Activated CD4-positive, alpha-beta T cell treated with anti-CD3 and anti-CD28 coated beads for 36 hours (primary cell): ENCODE measurements at regions of chr19 and their contacts with region 1.

Region 1: DNA sequence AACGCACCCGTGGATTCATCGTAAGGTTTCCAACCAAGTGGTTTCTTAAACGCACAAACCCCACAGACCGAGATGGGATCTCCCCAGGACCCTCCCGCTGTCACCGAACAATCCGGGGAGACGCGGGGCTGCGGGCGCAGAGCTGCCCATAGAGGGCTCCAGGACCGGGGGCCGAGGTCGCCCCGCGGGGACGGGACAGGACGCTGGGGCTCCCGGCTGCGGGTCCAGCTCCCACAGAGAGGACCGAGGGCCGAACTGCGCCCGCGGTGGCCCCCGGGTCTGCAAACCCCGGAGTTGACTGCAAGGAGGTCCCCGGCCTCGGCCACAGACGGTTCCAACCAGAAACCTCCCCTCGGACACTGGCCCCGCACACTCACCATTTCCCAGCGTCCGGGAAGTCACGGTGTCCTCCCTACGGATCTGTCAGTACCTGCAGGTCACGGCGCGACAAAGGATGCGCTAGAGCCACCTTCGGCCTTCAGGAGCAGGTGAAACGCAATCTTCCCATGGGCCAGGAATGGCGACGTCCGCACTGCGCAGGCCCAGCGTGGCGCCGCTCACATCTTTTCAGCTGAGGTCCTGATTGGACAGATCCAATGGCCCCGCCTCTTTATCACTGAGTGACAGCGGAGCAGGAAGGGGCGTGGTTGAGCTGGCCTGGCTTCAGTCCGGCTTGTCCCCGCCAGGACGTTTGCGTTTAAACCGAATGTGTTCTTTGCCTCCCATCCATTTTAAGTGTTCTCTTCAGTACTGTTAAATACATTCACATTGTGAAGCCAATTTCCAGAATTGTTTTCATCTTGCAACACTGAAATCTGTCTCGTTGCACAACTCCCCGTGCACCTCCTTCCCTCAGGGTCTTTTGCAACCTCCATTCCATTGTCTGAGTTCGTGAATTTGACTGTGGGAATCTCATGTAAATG is at the start of gene ZNF14:
- DNase-seq: peak; percentile 96
- ATAC-seq: peak; percentile 100
- H3K4me3 Mint-ChIP-seq: peak within 1 kb of the TSS; percentile 85
- H3K27ac Mint-ChIP-seq: peak within 1 kb of the TSS; percentile 87
- H3K4me1 Mint-ChIP-seq: peaks cover 20% of the 10 kb centered on the region
- H3K27me3 Mint-ChIP-seq: no peaks in the 10 kb centered on the region
- total RNA-seq, gene ZNF14: 9.2 TPM

Region 2: GRCh38 chr19:19531951-19532805 is 200.7 kb before region 1 on chr19:
- CTCF ChIA-PET with region 1: no interaction called
- POLR2A ChIA-PET with region 1: no interaction called
- intact Hi-C with region 1: loop called in 1 of 2 experiments (anchors 5 kb)
- DNase-seq: peak; percentile 92
- ATAC-seq: peak; percentile 87
- H3K4me3 Mint-ChIP-seq: no peak overlapping the region
- H3K27ac Mint-ChIP-seq: no peak overlapping the region
- H3K4me1 Mint-ChIP-seq: peaks cover 10% of the 10 kb centered on the region
- H3K27me3 Mint-ChIP-seq: no peaks in the 10 kb centered on the region

Region 3: GRCh38 chr19:19711934-19712828 is 20.7 kb before region 1 on chr19:
- CTCF ChIA-PET with region 1: no interaction called
- POLR2A ChIA-PET with region 1: no interaction called
- intact Hi-C with region 1: no loop called
- DNase-seq: no peak
- ATAC-seq: no peak
- H3K4me3 Mint-ChIP-seq: no peak overlapping the region
- H3K27ac Mint-ChIP-seq: no peak overlapping the region
- H3K4me1 Mint-ChIP-seq: no peaks in the 10 kb centered on the region
- H3K27me3 Mint-ChIP-seq: no peaks in the 10 kb centered on the region

Region 4: DNA sequence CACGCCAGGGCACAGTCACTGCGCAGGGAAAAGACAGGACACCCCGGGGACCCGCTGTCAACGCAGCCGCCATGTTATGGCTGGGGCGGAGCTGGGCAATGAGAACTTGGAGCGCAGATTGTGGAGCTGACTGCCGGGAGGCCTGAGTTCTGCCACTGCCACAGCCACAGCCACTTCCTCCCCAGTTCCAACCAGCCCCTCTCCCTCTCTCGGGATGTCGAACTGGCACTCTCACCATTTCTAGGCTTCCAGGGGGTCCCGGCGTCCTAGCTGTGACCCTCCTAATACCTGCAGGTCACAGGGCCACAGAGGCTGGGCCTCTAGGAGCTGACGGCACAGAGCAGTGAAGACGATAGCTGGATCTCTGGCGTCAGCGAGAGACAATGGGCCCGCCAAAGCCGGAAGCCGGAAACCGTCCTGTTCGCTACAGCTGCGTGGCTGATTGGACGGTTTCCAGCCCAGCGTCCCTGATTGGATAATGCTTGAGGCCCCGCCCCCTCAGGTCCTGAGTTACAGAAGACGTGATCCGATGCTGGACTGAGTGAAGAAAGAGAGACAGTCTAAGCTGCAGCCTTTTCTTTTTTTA is 88.6 kb after region 1 on chr19 and contains the start of gene ZNF506:
- CTCF ChIA-PET with region 1: no interaction called
- POLR2A ChIA-PET with region 1: interaction called, 6 read pairs
- intact Hi-C with region 1: loop called (anchors 1 kb)
- DNase-seq: peak; percentile 99
- ATAC-seq: peak; percentile 88
- H3K4me3 Mint-ChIP-seq: peak within 1 kb of the TSS; percentile 96
- H3K27ac Mint-ChIP-seq: peak within 1 kb of the TSS; percentile 99
- H3K4me1 Mint-ChIP-seq: peaks cover 43% of the 10 kb centered on the region
- H3K27me3 Mint-ChIP-seq: no peaks in the 10 kb centered on the region
- total RNA-seq, gene ZNF506: 33.3 to 41.3 TPM

Region 5: DNA sequence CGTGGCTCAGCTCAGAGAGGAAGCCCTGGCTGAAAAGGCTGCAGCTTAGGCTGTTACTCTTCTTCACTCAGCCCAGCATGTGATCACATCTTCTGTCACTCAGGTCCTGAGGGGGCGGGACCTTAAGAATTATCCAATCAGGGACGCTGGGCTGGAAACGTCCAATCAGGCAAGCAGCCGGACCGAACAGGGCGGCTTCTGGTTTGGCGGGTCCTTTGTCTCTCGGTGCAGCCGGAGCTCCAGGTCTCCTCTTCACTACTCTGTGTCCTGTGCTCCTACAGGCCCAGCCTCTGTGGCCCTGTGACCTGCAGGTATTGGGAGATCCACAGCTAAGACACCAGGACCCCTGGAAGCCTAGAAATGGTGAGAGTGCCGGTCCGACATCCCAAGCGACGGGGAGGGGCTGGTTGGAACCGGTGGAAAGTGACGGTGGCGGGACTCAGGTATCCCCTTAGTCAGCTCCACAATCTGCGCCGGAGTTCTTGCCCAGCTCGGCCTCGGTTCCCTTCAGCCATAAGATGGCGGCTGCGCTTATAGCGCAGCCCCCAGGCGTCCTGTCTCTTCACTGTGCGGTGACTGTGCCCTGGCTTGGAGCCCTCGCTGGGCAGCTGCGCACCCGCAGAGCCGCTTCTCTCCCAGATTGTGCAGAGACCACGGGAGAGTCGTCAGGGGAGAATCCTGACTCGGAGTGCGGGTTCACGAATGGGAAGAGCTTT is 168.0 kb after region 1 on chr19 and contains the start of gene ZNF93:
- CTCF ChIA-PET with region 1: interaction called, 3 read pairs
- POLR2A ChIA-PET with region 1: interaction called, 4 read pairs
- intact Hi-C with region 1: loop called in 1 of 2 experiments (anchors 1 kb)
- DNase-seq: peak; percentile 95
- ATAC-seq: peak; percentile 95
- H3K4me3 Mint-ChIP-seq: peak within 1 kb of the TSS; percentile 99
- H3K27ac Mint-ChIP-seq: peak within 1 kb of the TSS; percentile 97
- H3K4me1 Mint-ChIP-seq: peaks cover 39% of the 10 kb centered on the region
- H3K27me3 Mint-ChIP-seq: no peaks in the 10 kb centered on the region
- total RNA-seq, gene ZNF93: 21.7 to 22.3 TPM

Region 6: DNA sequence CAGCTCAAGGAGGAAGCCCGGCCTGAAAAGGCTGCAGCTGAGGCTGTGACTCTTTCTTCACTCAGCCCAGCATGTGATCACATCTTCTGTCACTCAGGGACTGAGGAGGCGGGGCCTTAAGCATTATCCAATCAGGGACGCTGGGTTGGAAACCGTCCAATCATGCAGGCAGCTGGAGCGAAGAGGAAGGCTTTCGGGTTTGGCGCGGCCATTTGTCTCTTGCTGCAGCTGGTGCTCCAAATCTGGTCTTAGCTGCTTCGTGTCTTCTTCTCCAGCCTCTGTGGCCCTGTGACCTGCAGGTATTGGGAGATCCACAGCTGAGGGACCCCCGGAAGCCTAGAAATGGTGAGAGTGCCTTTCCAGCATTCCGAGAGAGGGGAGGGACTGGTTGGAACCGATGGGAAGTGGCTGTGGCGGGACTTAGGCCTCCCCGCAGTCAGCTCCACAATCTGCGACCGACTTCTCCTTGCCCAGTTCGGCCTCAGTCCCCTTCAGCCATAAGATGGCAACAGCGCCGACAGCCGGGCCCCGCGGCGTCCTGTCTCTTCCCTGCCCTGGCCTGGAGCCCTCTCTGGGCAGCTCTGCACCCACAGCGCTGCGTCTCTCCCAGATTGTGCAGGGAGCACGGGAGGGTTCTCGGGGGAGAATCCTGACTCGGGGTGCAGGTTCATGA is 345.1 kb after region 1 on chr19 and contains the start of gene ZNF90:
- CTCF ChIA-PET with region 1: no interaction called
- POLR2A ChIA-PET with region 1: no interaction called
- intact Hi-C with region 1: loop called in 1 of 2 experiments (anchors 1 kb)
- DNase-seq: peak; percentile 96
- ATAC-seq: peak; percentile 100
- H3K4me3 Mint-ChIP-seq: peak within 1 kb of the TSS; percentile 97
- H3K27ac Mint-ChIP-seq: peak within 1 kb of the TSS; percentile 73
- H3K4me1 Mint-ChIP-seq: peaks cover 11% of the 10 kb centered on the region
- H3K27me3 Mint-ChIP-seq: no peaks in the 10 kb centered on the region
- total RNA-seq, gene ZNF90: 21.6 to 22.9 TPM

Region 7: GRCh38 chr19:20776083-20777076 is 1043.5 kb after region 1 on chr19 and contains the start of gene ZNF66:
- CTCF ChIA-PET with region 1: no interaction called
- POLR2A ChIA-PET with region 1: no interaction called
- intact Hi-C with region 1: loop called in 1 of 2 experiments (anchors 1 kb)
- DNase-seq: peak; percentile 96
- ATAC-seq: peak; percentile 98
- H3K4me3 Mint-ChIP-seq: peak within 1 kb of the TSS; percentile 98
- H3K27ac Mint-ChIP-seq: peak within 1 kb of the TSS; percentile 98
- H3K4me1 Mint-ChIP-seq: peaks cover 7% of the 10 kb centered on the region
- H3K27me3 Mint-ChIP-seq: no peaks in the 10 kb centered on the region
- total RNA-seq, gene ZNF66: 8.8 to 11.1 TPM